IMR-90 (cell line): ENCODE measurements at regions of chr6 and their contacts with region 1.

Region 1: GRCh38 chr6:87589693-87590549 is at the starts of genes ORC3 and RARS2:
- DNase-seq: peak; percentile 92
- ATAC-seq: peak; percentile 99
- H3K4me3 ChIP-seq: peak within 1 kb of the TSS; percentile 77
- H3K27ac ChIP-seq: peak within 1 kb of the TSS; percentile 90
- H3K4me1 ChIP-seq: peaks cover 2% of the 10 kb centered on the region
- H3K27me3 ChIP-seq: no peaks in the 10 kb centered on the region
- CTCF ChIP-seq: peak; percentile 3; the same call in 1 of the 2 replicates
- POLR2A ChIP-seq: peak; percentile 94
- RAD21 ChIP-seq: no peak
- total RNA-seq, gene ORC3: 30.6 and 33.1 TPM in 2 replicates
- total RNA-seq, gene RARS2: 33.0 and 56.9 TPM in 2 replicates

Region 2: DNA sequence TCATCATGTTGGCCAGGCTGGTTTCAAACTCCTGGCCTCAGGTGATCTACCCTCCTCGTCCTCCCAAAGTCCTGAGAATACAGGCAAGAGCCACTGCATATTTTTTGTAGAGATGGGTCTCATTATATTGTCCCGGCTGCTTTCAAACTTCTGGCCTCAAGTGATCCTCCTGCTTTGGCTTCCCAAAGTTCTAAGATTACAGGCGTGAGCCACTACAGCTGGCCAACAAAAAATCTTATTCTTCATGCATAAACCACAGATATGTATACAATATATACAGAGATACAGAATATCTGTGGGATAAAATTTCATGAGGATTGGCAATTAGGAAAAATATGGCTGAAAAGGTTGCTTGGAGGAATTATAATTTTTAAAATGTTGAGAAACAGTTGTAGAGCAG is 67.2 kb before region 1 on chr6:
- CTCF ChIA-PET with region 1: no interaction called
- POLR2A ChIA-PET with region 1: no interaction called
- dilution Hi-C with region 1: no loop called
- in situ Hi-C with region 1: no loop called
- intact Hi-C with region 1: loop called (anchors 2 kb)
- DNase-seq: peak; percentile 73
- ATAC-seq: peak; percentile 85
- H3K4me3 ChIP-seq: no peak overlapping the region
- H3K27ac ChIP-seq: no peak overlapping the region; the same call in 1 of the 2 replicates
- H3K4me1 ChIP-seq: peaks cover 2% of the 10 kb centered on the region; the same call in 1 of the 2 replicates
- H3K27me3 ChIP-seq: no peaks in the 10 kb centered on the region
- CTCF ChIP-seq: no peak
- POLR2A ChIP-seq: no peak
- RAD21 ChIP-seq: no peak

Region 3: DNA sequence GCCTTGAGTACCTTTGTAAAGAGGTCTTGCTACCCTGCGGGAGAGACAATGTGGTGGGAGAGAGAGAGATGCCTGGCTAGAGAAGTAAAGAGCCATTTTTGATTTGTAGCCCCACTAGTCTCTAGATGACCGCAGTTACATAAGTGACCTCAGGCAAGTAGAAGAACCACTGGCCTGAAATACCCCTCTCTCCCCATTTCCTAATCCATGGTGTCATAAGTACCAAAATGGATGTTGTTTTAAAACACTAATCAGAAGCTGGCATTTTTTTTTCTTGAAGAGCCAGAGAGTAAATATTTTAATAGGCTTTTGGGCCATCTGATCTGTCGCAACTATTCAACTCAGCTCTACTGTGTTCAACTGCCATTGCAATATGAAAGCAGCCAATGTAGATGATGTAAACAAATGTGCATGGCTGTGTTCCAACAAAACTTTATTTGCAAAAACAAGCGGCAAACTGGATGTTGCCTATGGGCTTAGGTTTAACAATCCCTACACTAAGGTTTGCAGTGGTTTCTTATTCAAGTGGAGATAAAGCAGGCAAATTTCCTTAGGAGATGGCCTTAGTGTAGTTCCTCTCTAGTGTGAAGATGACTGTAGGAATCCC is 36.7 kb before region 1 on chr6:
- CTCF ChIA-PET with region 1: no interaction called
- POLR2A ChIA-PET with region 1: no interaction called
- dilution Hi-C with region 1: no loop called
- in situ Hi-C with region 1: no loop called
- intact Hi-C with region 1: loop called (anchors 5 kb)
- DNase-seq: peak; percentile 11
- ATAC-seq: peak; percentile 35; the same call in 1 of the 2 replicates
- H3K4me3 ChIP-seq: no peak overlapping the region
- H3K27ac ChIP-seq: peak overlapping the region; percentile 46; the same call in 1 of the 2 replicates
- H3K4me1 ChIP-seq: no peaks in the 10 kb centered on the region
- H3K27me3 ChIP-seq: no peaks in the 10 kb centered on the region
- CTCF ChIP-seq: no peak
- POLR2A ChIP-seq: no peak
- RAD21 ChIP-seq: no peak

Region 4: GRCh38 chr6:87848574-87848973 is 258.7 kb after region 1 on chr6:
- CTCF ChIA-PET with region 1: no interaction called
- POLR2A ChIA-PET with region 1: no interaction called
- dilution Hi-C with region 1: no loop called
- in situ Hi-C with region 1: no loop called
- intact Hi-C with region 1: no loop called
- DNase-seq: no peak
- ATAC-seq: no peak
- H3K4me3 ChIP-seq: no peak overlapping the region
- H3K27ac ChIP-seq: no peak overlapping the region
- H3K4me1 ChIP-seq: no peaks in the 10 kb centered on the region
- H3K27me3 ChIP-seq: peaks cover 12% of the 10 kb centered on the region; the same call in 1 of the 2 replicates
- CTCF ChIP-seq: no peak
- POLR2A ChIP-seq: no peak
- RAD21 ChIP-seq: no peak

Region 5: DNA sequence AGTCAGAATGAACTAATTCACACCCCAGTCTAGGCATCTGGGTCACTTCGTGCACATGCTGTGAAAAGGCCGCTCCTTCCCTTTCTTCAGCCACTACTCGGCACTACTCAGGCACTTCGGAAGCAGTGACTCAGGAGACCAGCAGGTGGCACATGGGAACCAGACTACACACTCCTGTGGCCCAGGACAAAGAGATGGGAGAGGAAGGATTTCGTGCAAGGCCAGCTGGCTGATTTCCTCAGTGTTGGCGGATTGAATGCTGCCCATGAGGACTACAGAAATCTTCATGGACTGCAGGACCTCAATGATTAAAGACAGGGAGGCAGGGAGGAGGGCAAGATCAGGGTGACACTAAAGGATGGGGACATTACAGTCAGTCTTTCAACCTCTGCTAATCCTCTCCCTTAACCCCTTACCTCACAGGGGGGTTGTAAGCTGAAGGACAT is 339.9 kb after region 1 on chr6:
- CTCF ChIA-PET with region 1: no interaction called
- POLR2A ChIA-PET with region 1: no interaction called
- dilution Hi-C with region 1: no loop called
- in situ Hi-C with region 1: no loop called
- intact Hi-C with region 1: no loop called
- DNase-seq: peak; percentile 79
- ATAC-seq: peak; percentile 99
- H3K4me3 ChIP-seq: no peak overlapping the region
- H3K27ac ChIP-seq: no peak overlapping the region
- H3K4me1 ChIP-seq: no peaks in the 10 kb centered on the region
- H3K27me3 ChIP-seq: peaks cover 10% of the 10 kb centered on the region
- CTCF ChIP-seq: peak; percentile 79
- POLR2A ChIP-seq: no peak
- RAD21 ChIP-seq: peak; percentile 78